Colonic mucosa (tissue), 4 donors: ENCODE measurements at regions of chr6 and their contacts with region 1.

Region 1: DNA sequence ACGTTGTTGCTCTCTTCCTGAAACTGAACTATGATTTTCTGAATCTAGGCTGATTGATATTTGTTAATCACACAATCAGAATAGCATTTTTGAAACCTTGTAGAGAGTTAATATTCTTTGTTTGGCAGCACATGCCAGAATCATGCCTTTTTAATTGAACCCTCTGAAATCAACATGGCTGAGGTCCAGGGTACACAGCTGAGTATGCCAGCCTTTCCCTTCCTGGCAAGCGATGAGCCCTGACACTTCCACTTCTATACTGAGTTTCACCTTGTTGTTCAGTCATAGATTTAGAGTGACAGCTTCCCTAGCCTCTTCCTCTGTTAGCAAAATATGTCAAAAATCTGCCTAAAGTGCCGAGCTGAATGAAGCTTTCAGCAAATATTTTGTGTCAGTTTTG is 6.8 kb downstream of the HDDC2 start:
- DNase-seq: no peak
- H3K4me3 ChIP-seq: no peak overlapping the region
- H3K27ac ChIP-seq: no peak overlapping the region
- H3K4me1 ChIP-seq: peaks cover under 1% of the 10 kb centered on the region
- H3K27me3 ChIP-seq: no peaks in the 10 kb centered on the region
- CTCF ChIP-seq: no peak

Region 2: DNA sequence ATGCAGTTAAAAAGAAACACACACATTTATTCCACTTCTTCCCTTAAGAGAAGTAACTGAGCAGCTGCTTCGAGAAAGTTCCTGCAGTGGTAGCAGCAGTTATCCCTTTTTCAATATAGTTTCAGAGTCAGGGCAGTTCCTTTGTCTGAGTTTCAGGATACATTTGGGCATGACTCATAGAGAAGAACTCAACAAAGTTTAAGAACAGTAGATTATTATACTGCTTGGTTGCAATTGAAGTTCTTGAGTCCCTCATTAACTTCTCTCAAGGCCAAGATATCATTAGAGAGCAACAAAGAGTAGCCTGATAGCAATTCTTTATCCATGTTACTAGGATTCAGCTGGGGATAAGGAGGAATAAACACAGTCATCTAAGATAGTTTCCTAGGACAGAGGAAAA is 87.0 kb before region 1 on chr6:
- intact Hi-C with region 1: loop called (anchors 5 kb)
- DNase-seq: no peak
- H3K4me3 ChIP-seq: no peak overlapping the region
- H3K27ac ChIP-seq: no peak overlapping the region
- H3K4me1 ChIP-seq: no peaks in the 10 kb centered on the region
- H3K27me3 ChIP-seq: no peaks in the 10 kb centered on the region
- CTCF ChIP-seq: no peak